GM12878 (cell line): ENCODE measurements at regions of chr10 and their contacts with region 1.

Region 1: GRCh38 chr10:14604181-14605142 is 170.2 kb downstream of the FAM107B start:
- DNase-seq: no peak
- ATAC-seq: peak; percentile 52
- H3K4me3 ChIP-seq: peak overlapping the region; percentile 77
- H3K27ac ChIP-seq: peak overlapping the region; percentile 84
- H3K4me1 ChIP-seq: peaks cover 44% of the 10 kb centered on the region
- H3K27me3 ChIP-seq: no peaks in the 10 kb centered on the region
- CTCF ChIP-seq: no peak
- EP300 ChIP-seq: no peak
- POLR2A ChIP-seq: peak; percentile 85
- RAD21 ChIP-seq: 0 out of 2 replicates have a peak, but pooled peaks have one; percentile 1

Region 2: DNA sequence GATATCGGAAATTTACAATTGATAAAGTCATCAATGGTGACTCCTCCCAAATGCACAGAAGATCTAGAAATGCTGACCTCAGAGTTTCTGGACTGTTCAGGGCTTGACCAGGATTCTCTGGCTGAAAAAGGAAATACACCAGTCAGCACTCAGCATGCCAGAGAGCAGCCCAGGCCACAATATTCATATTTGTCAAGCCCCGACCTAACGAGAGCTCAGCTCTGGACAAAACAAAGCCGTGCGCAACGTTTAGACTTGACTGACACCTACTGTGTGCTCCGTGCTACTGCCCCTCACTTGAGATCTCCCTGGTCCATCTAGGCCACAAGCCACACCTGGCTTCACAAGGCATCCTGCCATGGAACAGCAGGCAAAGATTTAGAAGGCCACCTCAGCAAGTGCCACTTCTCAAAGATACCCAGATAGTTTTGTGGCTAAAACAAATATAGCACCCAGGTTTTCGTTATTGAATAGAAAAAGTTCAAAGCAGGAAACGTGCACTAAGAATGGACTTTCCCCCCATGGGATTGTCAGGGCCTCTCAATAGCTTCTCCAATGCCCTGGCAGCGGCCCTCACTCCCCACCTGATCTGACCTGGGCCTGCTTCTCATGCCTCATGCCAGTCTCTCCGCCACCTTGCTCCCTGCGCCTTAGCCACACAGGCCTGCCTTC is 48.0 kb before region 1 on chr10:
- CTCF ChIA-PET with region 1: no interaction called
- POLR2A ChIA-PET with region 1: interaction called, 3 read pairs
- RAD21 ChIA-PET with region 1: no interaction called
- SMC1A ChIA-PET with region 1: interaction called, 4 read pairs
- in situ Hi-C with region 1: no loop called
- intact Hi-C with region 1: loop called (anchors 5 kb)
- DNase-seq: peak; percentile 39
- ATAC-seq: peak; percentile 71
- H3K4me3 ChIP-seq: no peak overlapping the region
- H3K27ac ChIP-seq: peak overlapping the region; percentile 46
- H3K4me1 ChIP-seq: peaks cover 42% of the 10 kb centered on the region
- H3K27me3 ChIP-seq: no peaks in the 10 kb centered on the region
- CTCF ChIP-seq: peak; percentile 46 to 68 (median 51); a peak in 5 of 6 replicates
- EP300 ChIP-seq: no peak
- POLR2A ChIP-seq: 0 out of 2 replicates have a peak, but pooled peaks have one; percentile 32
- RAD21 ChIP-seq: peak; percentile 57

Region 3: GRCh38 chr10:14588084-14588937 is 16.2 kb before region 1 on chr10:
- CTCF ChIA-PET with region 1: interaction called, 17 read pairs
- POLR2A ChIA-PET with region 1: interaction called, 5 read pairs
- RAD21 ChIA-PET with region 1: interaction called, 19 read pairs
- SMC1A ChIA-PET with region 1: interaction called, 19 read pairs
- in situ Hi-C with region 1: no loop called
- intact Hi-C with region 1: no loop called
- DNase-seq: no peak
- ATAC-seq: peak; percentile 72
- H3K4me3 ChIP-seq: no peak overlapping the region
- H3K27ac ChIP-seq: peak overlapping the region; percentile 64
- H3K4me1 ChIP-seq: peaks cover 56% of the 10 kb centered on the region
- H3K27me3 ChIP-seq: no peaks in the 10 kb centered on the region
- CTCF ChIP-seq: no peak
- EP300 ChIP-seq: peak; percentile 23 to 80; a peak in 3 of 4 replicates
- POLR2A ChIP-seq: no peak
- RAD21 ChIP-seq: no peak

Region 4: DNA sequence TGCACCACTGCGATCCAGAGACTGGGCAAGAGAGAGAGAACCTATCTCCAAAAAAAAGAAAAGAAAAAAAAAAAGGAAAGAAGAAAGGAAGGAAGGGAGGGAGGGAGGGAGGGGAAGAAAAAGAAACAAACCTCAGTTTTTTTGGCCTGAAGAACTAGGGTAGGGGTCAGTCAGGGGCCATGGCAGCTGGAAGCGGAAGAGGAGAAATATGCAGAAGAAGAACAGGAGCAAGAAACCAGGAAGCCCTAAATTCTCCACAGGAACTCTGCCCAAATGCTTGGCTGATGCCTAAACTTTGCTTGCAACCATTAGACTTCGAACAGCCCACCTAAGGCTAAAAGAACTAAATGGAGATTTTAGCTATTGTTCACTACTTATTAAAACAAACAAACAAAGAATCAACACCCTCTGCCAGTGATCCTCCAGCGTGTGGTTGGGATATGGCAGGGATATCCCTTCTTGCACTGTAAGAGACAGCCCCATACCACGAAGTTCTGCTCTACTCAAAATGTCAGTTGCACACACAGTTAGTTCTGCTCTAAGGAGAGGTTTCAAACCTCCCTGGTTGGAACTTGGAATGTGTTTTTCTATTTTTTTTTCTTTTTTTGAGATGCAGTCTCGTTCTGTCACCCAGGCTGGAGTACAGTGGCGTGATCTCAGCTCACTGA is 30.7 kb after region 1 on chr10:
- CTCF ChIA-PET with region 1: no interaction called
- POLR2A ChIA-PET with region 1: interaction called, 99 read pairs
- RAD21 ChIA-PET with region 1: no interaction called
- SMC1A ChIA-PET with region 1: interaction called, 15 read pairs
- in situ Hi-C with region 1: no loop called
- intact Hi-C with region 1: no loop called
- DNase-seq: no peak
- ATAC-seq: no peak
- H3K4me3 ChIP-seq: no peak overlapping the region
- H3K27ac ChIP-seq: no peak overlapping the region
- H3K4me1 ChIP-seq: no peaks in the 10 kb centered on the region
- H3K27me3 ChIP-seq: 0 out of 4 replicates have a peak, but pooled peaks cover 0 to 2% of the 10 kb centered on the region in 2 experiments
- CTCF ChIP-seq: no peak
- EP300 ChIP-seq: no peak
- POLR2A ChIP-seq: no peak
- RAD21 ChIP-seq: no peak

Region 5: DNA sequence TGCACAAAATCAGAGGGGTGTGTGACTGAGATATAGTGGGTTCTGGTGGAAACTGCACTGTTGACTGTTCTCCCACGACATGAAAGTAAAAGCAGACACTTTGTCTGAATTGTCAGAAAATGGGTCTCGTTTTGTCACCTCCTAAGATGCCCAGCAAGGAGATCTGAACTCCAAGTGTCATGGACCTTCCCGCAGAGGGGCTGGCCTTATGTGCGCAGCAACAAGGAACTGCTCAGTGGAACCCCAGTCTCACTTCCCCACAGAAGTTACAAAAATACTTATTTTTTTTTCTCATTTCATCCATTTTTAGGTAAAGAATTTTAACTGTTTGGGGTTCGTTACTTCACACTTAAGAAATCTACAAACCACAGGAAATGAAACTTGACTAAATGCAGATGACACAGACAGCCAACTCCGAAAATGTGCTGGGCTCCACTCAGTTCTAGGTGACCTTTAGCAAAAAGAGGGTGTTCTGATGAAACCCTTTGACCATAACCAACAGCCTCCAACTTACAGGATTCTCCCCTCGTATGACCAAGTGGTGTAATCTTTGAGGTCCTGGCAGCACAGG is 55.2 kb after region 1 on chr10:
- CTCF ChIA-PET with region 1: no interaction called
- POLR2A ChIA-PET with region 1: interaction called, 3 read pairs
- RAD21 ChIA-PET with region 1: interaction called, 6 read pairs
- SMC1A ChIA-PET with region 1: interaction called, 9 read pairs
- in situ Hi-C with region 1: no loop called
- intact Hi-C with region 1: loop called (anchors 1 kb)
- DNase-seq: peak; percentile 88
- ATAC-seq: peak; percentile 87
- H3K4me3 ChIP-seq: peak overlapping the region; percentile 26; the same call in 1 of the 2 replicates
- H3K27ac ChIP-seq: peak overlapping the region; percentile 33
- H3K4me1 ChIP-seq: peaks cover 43% of the 10 kb centered on the region
- H3K27me3 ChIP-seq: no peaks in the 10 kb centered on the region; a peak in 1 of 4 replicates
- CTCF ChIP-seq: no peak
- EP300 ChIP-seq: peak; percentile 87 to 96
- POLR2A ChIP-seq: no peak
- RAD21 ChIP-seq: peak; percentile 12; the same call in 1 of the 2 replicates

Region 6: DNA sequence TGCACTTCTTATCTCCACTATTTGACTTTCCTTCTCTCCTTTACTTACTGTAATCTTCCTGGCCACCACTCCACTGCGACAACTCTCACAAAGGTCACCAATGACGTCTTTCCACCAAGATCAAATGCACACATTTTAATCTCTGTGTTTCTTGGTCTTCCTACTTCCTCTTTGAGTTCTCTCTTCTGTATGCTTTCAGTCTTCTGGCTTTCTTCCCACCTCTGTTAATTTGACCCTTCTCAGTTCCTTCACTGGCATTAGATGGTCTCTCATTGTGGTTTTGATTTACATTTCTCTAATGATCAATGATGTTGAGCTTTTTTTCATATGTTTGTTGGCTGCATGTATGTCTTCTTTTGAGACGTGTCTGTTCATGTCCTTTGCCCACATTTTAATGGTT is 138.4 kb after region 1 on chr10:
- CTCF ChIA-PET with region 1: interaction called, 4 read pairs
- POLR2A ChIA-PET with region 1: no interaction called
- RAD21 ChIA-PET with region 1: interaction called, 5 read pairs
- SMC1A ChIA-PET with region 1: interaction called, 3 read pairs
- in situ Hi-C with region 1: loop called (anchors 5 kb)
- intact Hi-C with region 1: loop called (anchors 2 kb)
- DNase-seq: peak; percentile 76
- ATAC-seq: peak; percentile 92
- H3K4me3 ChIP-seq: no peak overlapping the region
- H3K27ac ChIP-seq: peak overlapping the region; percentile 69
- H3K4me1 ChIP-seq: peaks cover 32% of the 10 kb centered on the region
- H3K27me3 ChIP-seq: no peaks in the 10 kb centered on the region
- CTCF ChIP-seq: no peak
- EP300 ChIP-seq: peak; percentile 90 to 98; a peak in 3 of 4 replicates
- POLR2A ChIP-seq: no peak
- RAD21 ChIP-seq: no peak

Region 7: GRCh38 chr10:14954001-14954770 is 349.7 kb after region 1 on chr10 and contains the start of gene DCLRE1C:
- CTCF ChIA-PET with region 1: no interaction called
- POLR2A ChIA-PET with region 1: interaction called, 3 read pairs
- RAD21 ChIA-PET with region 1: interaction called, 3 read pairs
- SMC1A ChIA-PET with region 1: no interaction called
- in situ Hi-C with region 1: no loop called
- intact Hi-C with region 1: loop called (anchors 5 kb)
- DNase-seq: peak; percentile 82
- ATAC-seq: peak; percentile 86
- H3K4me3 ChIP-seq: peak within 1 kb of the TSS; percentile 91
- H3K27ac ChIP-seq: peak within 1 kb of the TSS; percentile 98
- H3K4me1 ChIP-seq: peaks cover 21% of the 10 kb centered on the region
- H3K27me3 ChIP-seq: no peaks in the 10 kb centered on the region
- CTCF ChIP-seq: no peak
- EP300 ChIP-seq: peak in 1 of 2 experiments; percentile 56; a peak in 2 of 4 replicates
- POLR2A ChIP-seq: peak; percentile 80
- RAD21 ChIP-seq: no peak
- polyA plus RNA-seq, gene DCLRE1C: 15.7 to 26.2 TPM

Region 8: GRCh38 chr10:15141136-15142054 is 536.9 kb after region 1 on chr10:
- CTCF ChIA-PET with region 1: no interaction called
- POLR2A ChIA-PET with region 1: no interaction called
- RAD21 ChIA-PET with region 1: no interaction called
- SMC1A ChIA-PET with region 1: no interaction called
- in situ Hi-C with region 1: no loop called
- intact Hi-C with region 1: no loop called
- DNase-seq: peak; percentile 85
- ATAC-seq: peak; percentile 96
- H3K4me3 ChIP-seq: peak overlapping the region; percentile 19; the same call in 1 of the 2 replicates
- H3K27ac ChIP-seq: peak overlapping the region; percentile 7; the same call in 1 of the 2 replicates
- H3K4me1 ChIP-seq: peaks cover 16% of the 10 kb centered on the region
- H3K27me3 ChIP-seq: no peaks in the 10 kb centered on the region
- CTCF ChIP-seq: no peak
- EP300 ChIP-seq: peak; percentile 98 to 99
- POLR2A ChIP-seq: no peak
- RAD21 ChIP-seq: no peak